Activated CD4-positive, alpha-beta memory T cell treated with anti-CD3 and anti-CD28 coated beads, Interleukin-2, amount 10 ng/mL, durations not matched to agents 7 days and 5 days (primary cell): ENCODE measurements at regions of chr5 and their contacts with region 1.

Region 1: GRCh38 chr5:126776497-126777256 is at the start of gene LMNB1:
- DNase-seq: peak; percentile 96
- H3K4me3 Mint-ChIP-seq: peak within 1 kb of the TSS; percentile 95
- H3K27ac Mint-ChIP-seq: peak within 1 kb of the TSS; percentile 94
- H3K4me1 Mint-ChIP-seq: peaks cover 30% of the 10 kb centered on the region
- H3K27me3 Mint-ChIP-seq: no peaks in the 10 kb centered on the region
- total RNA-seq, gene LMNB1: 291 to 296 TPM

Region 2: DNA sequence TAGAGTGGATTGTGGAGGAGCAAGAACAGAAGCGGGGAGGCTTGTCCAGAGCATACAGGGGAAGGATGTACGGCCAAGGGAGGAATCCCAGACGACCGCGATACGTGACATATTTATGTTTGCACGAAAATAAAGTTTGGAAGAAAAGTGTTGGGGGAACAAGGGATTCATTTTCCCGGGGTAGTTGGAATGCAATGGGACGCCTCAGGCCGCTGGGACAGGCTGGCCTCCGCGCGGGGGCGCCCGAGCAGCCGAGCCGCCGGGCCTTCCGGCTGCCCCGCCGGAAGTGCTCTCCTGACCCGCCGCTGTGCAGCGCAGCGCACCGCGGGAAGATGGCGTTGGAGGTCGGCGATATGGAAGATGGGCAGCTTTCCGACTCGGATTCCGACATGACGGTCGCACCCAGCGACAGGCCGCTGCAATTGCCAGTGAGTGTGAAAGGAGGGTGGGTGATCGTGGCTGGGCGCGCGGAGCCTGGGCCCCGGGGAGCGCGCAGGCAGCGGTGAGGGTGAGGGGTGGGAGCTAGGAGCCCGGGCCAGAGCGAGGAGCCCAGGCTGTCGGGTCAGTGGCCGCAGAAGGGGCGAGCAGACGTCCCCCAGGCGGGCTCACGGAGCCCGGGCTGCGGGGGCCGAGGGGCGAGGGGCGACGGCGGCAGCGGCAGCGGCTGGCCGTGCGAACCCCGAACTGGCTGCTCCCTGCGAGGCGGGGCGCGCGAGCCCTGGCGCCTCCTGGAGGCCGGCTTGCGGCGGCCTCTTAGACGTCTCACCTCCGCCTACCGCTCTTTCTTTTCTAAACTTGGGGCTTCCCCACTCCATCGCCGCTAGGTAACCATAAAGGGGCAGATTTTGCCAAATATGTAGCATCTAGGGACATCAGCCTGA is 175.8 kb before region 1 on chr5 and contains the start of gene PHAX:
- CTCF ChIA-PET with region 1: interaction called, 9 read pairs
- POLR2A ChIA-PET with region 1: interaction called, 17 read pairs
- DNase-seq: peak; percentile 77
- H3K4me3 Mint-ChIP-seq: peak within 1 kb of the TSS; percentile 97
- H3K27ac Mint-ChIP-seq: peak within 1 kb of the TSS; percentile 89
- H3K4me1 Mint-ChIP-seq: peaks cover 34% of the 10 kb centered on the region
- H3K27me3 Mint-ChIP-seq: peaks cover 6% of the 10 kb centered on the region
- total RNA-seq, gene PHAX: 31.5 to 33.8 TPM

Region 3: GRCh38 chr5:126686451-126687126 is 90.1 kb before region 1 on chr5:
- CTCF ChIA-PET with region 1: interaction called, 233 read pairs
- POLR2A ChIA-PET with region 1: interaction called, 207 read pairs
- DNase-seq: no peak
- H3K4me3 Mint-ChIP-seq: no peak overlapping the region
- H3K27ac Mint-ChIP-seq: no peak overlapping the region
- H3K4me1 Mint-ChIP-seq: peaks cover 16% of the 10 kb centered on the region
- H3K27me3 Mint-ChIP-seq: peaks cover 2% of the 10 kb centered on the region

Region 4: GRCh38 chr5:126736141-126736540 is 40.5 kb before region 1 on chr5:
- CTCF ChIA-PET with region 1: interaction called, 22 read pairs
- POLR2A ChIA-PET with region 1: interaction called, 154 read pairs
- DNase-seq: peak; percentile 7
- H3K4me3 Mint-ChIP-seq: no peak overlapping the region
- H3K27ac Mint-ChIP-seq: no peak overlapping the region
- H3K4me1 Mint-ChIP-seq: peaks cover 5% of the 10 kb centered on the region
- H3K27me3 Mint-ChIP-seq: peaks cover 6% of the 10 kb centered on the region

Region 5: GRCh38 chr5:126763371-126763770 is 13.3 kb before region 1 on chr5:
- CTCF ChIA-PET with region 1: interaction called, 67 read pairs
- POLR2A ChIA-PET with region 1: interaction called, 377 read pairs
- DNase-seq: no peak
- H3K4me3 Mint-ChIP-seq: peak overlapping the region; percentile 27
- H3K27ac Mint-ChIP-seq: peak overlapping the region; percentile 78
- H3K4me1 Mint-ChIP-seq: peaks cover 42% of the 10 kb centered on the region
- H3K27me3 Mint-ChIP-seq: no peaks in the 10 kb centered on the region

Region 6: GRCh38 chr5:126808521-126808988 is 31.9 kb after region 1 on chr5:
- CTCF ChIA-PET with region 1: interaction called, 39 read pairs
- POLR2A ChIA-PET with region 1: interaction called, 134 read pairs
- DNase-seq: no peak
- H3K4me3 Mint-ChIP-seq: no peak overlapping the region
- H3K27ac Mint-ChIP-seq: no peak overlapping the region
- H3K4me1 Mint-ChIP-seq: peaks cover 56% of the 10 kb centered on the region
- H3K27me3 Mint-ChIP-seq: no peaks in the 10 kb centered on the region

Region 7: GRCh38 chr5:126875303-126875785 is 98.7 kb after region 1 on chr5:
- CTCF ChIA-PET with region 1: no interaction called
- POLR2A ChIA-PET with region 1: no interaction called
- DNase-seq: no peak
- H3K4me3 Mint-ChIP-seq: no peak overlapping the region
- H3K27ac Mint-ChIP-seq: no peak overlapping the region
- H3K4me1 Mint-ChIP-seq: peaks cover 1% of the 10 kb centered on the region
- H3K27me3 Mint-ChIP-seq: no peaks in the 10 kb centered on the region

Region 8: GRCh38 chr5:127072861-127073846 is 296.5 kb after region 1 on chr5 and contains the start of gene C5orf63:
- CTCF ChIA-PET with region 1: interaction called, 6 read pairs
- POLR2A ChIA-PET with region 1: interaction called, 10 read pairs
- DNase-seq: peak; percentile 76
- H3K4me3 Mint-ChIP-seq: peak within 1 kb of the TSS; percentile 82
- H3K27ac Mint-ChIP-seq: peak within 1 kb of the TSS; percentile 67
- H3K4me1 Mint-ChIP-seq: peaks cover 13% of the 10 kb centered on the region
- H3K27me3 Mint-ChIP-seq: no peaks in the 10 kb centered on the region
- total RNA-seq, gene C5orf63: 6.6 to 7.1 TPM